GM12878 (cell line): ENCODE measurements at regions of chr2 and their contacts with region 1.

Region 1: GRCh38 chr2:96960153-96960961 is 26.0 kb downstream of the FAM178B start:
- DNase-seq: no peak
- ATAC-seq: peak; percentile 99
- H3K4me3 ChIP-seq: no peak overlapping the region
- H3K27ac ChIP-seq: no peak overlapping the region
- H3K4me1 ChIP-seq: peaks cover 14% of the 10 kb centered on the region
- H3K27me3 ChIP-seq: no peaks in the 10 kb centered on the region
- CTCF ChIP-seq: peak; percentile 94 to 97 (median 97)
- EP300 ChIP-seq: no peak
- POLR2A ChIP-seq: no peak
- RAD21 ChIP-seq: peak; percentile 85

Region 2: GRCh38 chr2:96574364-96574763 is 386.0 kb before region 1 on chr2:
- CTCF ChIA-PET with region 1: no interaction called
- POLR2A ChIA-PET with region 1: no interaction called
- RAD21 ChIA-PET with region 1: no interaction called
- SMC1A ChIA-PET with region 1: no interaction called
- in situ Hi-C with region 1: no loop called
- intact Hi-C with region 1: loop called (anchors 10 kb)
- DNase-seq: no peak
- ATAC-seq: no peak
- H3K4me3 ChIP-seq: no peak overlapping the region
- H3K27ac ChIP-seq: no peak overlapping the region
- H3K4me1 ChIP-seq: no peaks in the 10 kb centered on the region
- H3K27me3 ChIP-seq: no peaks in the 10 kb centered on the region
- CTCF ChIP-seq: 0 out of 6 replicates have a peak, but pooled peaks of 1 of the 3 experiments have one; percentile 13
- EP300 ChIP-seq: no peak
- POLR2A ChIP-seq: no peak
- RAD21 ChIP-seq: no peak

Region 3: DNA sequence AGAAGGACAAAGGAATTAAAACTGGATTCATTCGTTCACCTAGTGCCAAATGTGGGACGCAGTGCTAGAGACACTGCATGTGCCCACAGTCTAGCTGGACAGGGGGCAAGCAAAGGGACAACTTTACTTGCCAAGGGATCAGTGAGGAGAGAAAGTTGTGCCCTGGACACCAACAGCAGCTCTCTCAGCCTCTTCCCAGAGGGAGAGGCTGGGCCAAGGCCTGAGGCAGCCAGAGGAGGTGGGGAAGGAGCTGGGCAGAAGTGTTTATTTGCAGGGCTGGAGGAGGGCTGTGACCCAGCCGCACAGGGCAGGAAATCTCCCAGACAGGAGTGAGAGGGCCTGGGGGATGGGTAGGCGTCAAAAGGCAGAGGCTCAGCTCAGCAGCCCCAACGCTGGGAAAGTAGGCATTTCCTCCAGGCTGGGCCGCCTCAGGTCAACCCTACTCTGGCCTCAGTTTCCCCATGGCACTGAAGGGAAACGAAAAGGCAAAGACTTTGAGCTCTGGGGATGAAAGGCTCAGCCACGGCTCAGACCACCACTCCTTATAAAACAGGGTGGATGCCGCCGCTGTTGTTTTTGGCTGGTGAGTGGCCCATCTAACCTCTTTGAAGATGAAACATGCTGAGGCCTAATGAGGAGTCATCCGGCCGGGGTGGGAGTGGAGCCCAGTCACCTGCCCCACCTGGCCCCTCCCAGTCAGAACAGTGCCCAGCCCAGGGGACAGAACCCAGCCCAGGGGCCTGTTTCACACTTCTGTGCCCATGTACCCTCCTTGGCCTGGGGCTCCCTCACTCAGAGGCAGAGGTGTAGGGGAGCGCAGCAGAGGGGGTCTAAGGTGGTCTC is 68.6 kb before region 1 on chr2:
- CTCF ChIA-PET with region 1: no interaction called
- POLR2A ChIA-PET with region 1: no interaction called
- RAD21 ChIA-PET with region 1: no interaction called
- SMC1A ChIA-PET with region 1: no interaction called
- in situ Hi-C with region 1: no loop called
- intact Hi-C with region 1: no loop called
- DNase-seq: no peak
- ATAC-seq: no peak
- H3K4me3 ChIP-seq: no peak overlapping the region
- H3K27ac ChIP-seq: no peak overlapping the region
- H3K4me1 ChIP-seq: no peaks in the 10 kb centered on the region
- H3K27me3 ChIP-seq: no peaks in the 10 kb centered on the region
- CTCF ChIP-seq: no peak
- EP300 ChIP-seq: no peak
- POLR2A ChIP-seq: no peak
- RAD21 ChIP-seq: no peak

Region 4: DNA sequence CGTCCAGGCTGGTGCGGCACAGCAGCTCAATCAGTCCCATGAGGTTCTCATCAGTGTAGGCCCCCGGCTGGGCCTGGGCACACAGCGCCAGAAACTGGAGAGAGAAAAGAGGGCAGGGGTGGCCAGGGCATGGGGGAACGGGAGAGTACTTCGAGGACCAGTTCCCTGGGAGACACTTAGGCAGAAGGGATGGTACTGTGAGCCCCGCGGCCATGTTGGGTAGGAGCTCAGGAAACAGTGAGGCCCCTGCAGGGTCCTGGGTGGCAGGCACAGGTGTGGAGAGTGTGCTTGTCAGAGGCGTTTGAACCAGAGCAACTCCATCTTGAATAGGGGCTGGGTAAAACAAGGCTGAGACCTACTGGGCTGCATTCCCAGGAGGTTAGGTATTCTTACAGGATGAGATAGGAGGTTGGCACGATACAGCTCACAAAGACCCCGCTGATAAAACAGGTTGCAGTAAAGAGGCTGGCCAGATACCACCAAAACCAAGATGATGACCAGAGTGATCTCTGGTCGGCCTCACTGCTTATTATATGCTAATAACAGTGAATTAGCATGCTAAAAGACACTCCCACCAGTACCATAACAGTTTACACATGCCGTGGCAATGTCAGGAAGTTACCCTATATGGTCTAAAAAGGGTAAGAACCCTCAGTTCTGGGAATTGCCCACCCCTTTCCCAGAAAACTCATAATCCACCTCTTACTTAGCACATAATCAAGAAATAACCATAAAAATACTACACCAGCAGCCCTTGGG is 38.6 kb before region 1 on chr2:
- CTCF ChIA-PET with region 1: no interaction called
- POLR2A ChIA-PET with region 1: no interaction called
- RAD21 ChIA-PET with region 1: no interaction called
- SMC1A ChIA-PET with region 1: no interaction called
- in situ Hi-C with region 1: no loop called
- intact Hi-C with region 1: no loop called
- DNase-seq: no peak
- ATAC-seq: no peak
- H3K4me3 ChIP-seq: no peak overlapping the region
- H3K27ac ChIP-seq: no peak overlapping the region
- H3K4me1 ChIP-seq: no peaks in the 10 kb centered on the region
- H3K27me3 ChIP-seq: peaks cover 0 to 3% of the 10 kb centered on the region in 2 experiments; a peak in 2 of 4 replicates
- CTCF ChIP-seq: no peak
- EP300 ChIP-seq: no peak
- POLR2A ChIP-seq: no peak
- RAD21 ChIP-seq: no peak